ENCODE measurements at regions of chr20 and their contacts with region 1.

Region 1: DNA sequence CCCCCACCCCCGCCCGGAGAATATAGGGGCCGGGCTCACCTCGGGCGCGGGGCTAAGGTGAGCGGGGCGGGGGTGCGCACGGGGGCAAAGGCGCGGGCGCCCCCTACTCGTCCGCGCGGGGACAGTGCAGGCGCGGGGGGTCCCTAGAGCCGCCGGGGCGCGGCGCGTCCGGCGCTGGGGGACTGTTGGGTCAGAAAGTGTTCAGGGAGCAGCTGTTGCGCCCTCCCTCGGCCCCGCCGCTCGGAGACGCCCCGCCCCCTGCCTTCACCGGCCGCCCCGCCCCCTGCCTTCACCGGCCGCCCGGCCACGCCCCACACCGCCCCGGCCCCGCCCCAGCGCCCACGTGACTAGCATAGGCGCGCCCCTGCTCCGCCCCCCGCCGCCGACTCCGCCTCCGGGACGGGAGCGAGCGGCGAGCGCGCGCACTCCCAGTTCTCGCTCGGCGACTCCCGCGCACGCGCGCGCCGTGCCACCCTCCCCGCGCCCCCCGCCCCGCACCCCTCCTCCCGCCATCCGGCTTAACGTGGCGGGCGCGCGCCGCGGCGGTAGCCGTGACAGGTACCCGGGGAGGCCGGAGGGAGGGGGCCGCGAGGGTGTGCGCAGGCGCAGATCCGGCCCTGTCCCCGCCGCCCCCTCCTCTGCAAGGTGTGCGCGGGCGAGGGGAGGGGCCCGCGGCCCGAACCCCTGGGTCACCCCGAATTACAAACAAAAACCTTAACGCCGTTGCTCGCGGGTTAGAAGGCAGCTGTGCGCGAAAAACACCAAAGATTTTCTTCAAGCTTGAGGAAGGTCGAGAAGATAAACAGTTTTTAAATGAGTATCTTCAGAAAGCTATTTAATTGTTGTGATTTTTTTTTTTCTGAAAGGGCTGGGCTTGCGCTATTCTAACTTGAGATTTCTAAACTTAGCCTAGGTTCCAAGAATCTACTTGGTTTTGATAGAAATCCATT is 704 bp upstream of the ZNF217 start:
- DNase-seq: peak; percentile 90 to 97 (median 94)
- H3K4me3 ChIP-seq: peak overlapping the region; percentile 45 to 91 (median 77)
- H3K27ac ChIP-seq: peak overlapping the region; percentile 66 to 98 (median 94)
- H3K27me3 ChIP-seq: no peaks in the 10 kb centered on the region
- CTCF ChIP-seq: peak in 45 of 56 donors; percentile 13 to 59 (median 35)

Region 2: GRCh38 chr20:53425941-53426340 is 168.4 kb before region 1 on chr20:
- intact Hi-C with region 1: no loop called
- DNase-seq: no peak
- H3K4me3 ChIP-seq: no peak overlapping the region
- H3K27ac ChIP-seq: no peak overlapping the region
- H3K27me3 ChIP-seq: peaks cover 0 to 4% (median 0%) of the 10 kb centered on the region in 45 donors
- CTCF ChIP-seq: no peak

Region 3: GRCh38 chr20:53652090-53652858 is 57.9 kb after region 1 on chr20:
- intact Hi-C with region 1: no loop called
- DNase-seq: no peak
- H3K4me3 ChIP-seq: peak overlapping the region in 18 of 59 donors; percentile 2 to 28 (median 14)
- H3K27ac ChIP-seq: peak overlapping the region in 47 of 59 donors; percentile 1 to 74 (median 42)
- H3K27me3 ChIP-seq: no peaks in the 10 kb centered on the region
- CTCF ChIP-seq: no peak

Region 4: GRCh38 chr20:53677447-53678314 is 83.3 kb after region 1 on chr20:
- intact Hi-C with region 1: loop called in 1 of 2 experiments (anchors 5 kb)
- DNase-seq: no peak
- H3K4me3 ChIP-seq: no peak overlapping the region
- H3K27ac ChIP-seq: peak overlapping the region in 50 of 59 donors; percentile 21 to 92 (median 83)
- H3K27me3 ChIP-seq: no peaks in the 10 kb centered on the region
- CTCF ChIP-seq: no peak

Region 5: GRCh38 chr20:53738039-53738944 is 143.9 kb after region 1 on chr20:
- intact Hi-C with region 1: loop called in 1 of 2 experiments (anchors 10 kb)
- DNase-seq: peak in 5 of 10 donors; percentile 13 to 46 (median 29)
- H3K4me3 ChIP-seq: peak overlapping the region in 38 of 59 donors; percentile 0 to 56 (median 30)
- H3K27ac ChIP-seq: peak overlapping the region in 9 of 59 donors; percentile 13 to 38 (median 25)
- H3K27me3 ChIP-seq: peaks cover 0 to 8% (median 0%) of the 10 kb centered on the region in 45 donors
- CTCF ChIP-seq: no peak

Region 6: GRCh38 chr20:53750827-53751619 is 156.7 kb after region 1 on chr20:
- intact Hi-C with region 1: loop called in 1 of 2 experiments (anchors 10 kb)
- DNase-seq: peak in 3 of 10 donors; percentile 32 to 49 (median 39)
- H3K4me3 ChIP-seq: peak overlapping the region in 14 of 59 donors; percentile 0 to 39 (median 15)
- H3K27ac ChIP-seq: peak overlapping the region in 20 of 59 donors; percentile 0 to 54 (median 20)
- H3K27me3 ChIP-seq: no peaks in the 10 kb centered on the region
- CTCF ChIP-seq: no peak

Region 7: DNA sequence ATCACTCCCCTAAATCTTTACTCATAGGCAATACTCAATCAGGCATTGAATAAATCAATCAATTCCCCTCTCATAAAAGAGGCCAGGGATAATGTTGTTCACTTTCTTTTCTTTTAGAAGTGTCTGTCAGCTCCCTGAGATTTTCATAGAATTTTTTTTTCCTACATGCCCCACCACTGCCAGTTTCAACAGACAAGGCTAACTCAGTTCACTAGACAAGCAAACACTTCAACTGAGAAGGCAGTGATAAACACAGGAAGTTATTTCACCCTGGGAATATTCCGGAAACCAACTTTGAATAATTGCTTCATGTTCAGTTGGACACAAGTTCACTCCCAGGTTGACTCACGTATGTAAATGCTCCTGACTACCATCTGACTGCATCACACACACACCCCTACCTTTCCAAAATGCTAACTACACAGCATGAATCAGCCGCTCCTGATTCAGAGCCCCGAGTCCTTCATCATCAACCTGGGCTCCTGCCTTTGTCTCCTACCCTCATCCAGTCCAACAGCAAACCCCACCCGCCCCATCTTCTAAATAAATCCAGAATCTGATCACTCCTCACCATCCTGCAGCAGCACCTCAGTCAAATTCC is 332.2 kb after region 1 on chr20:
- intact Hi-C with region 1: no loop called
- DNase-seq: no peak
- H3K4me3 ChIP-seq: no peak overlapping the region
- H3K27ac ChIP-seq: no peak overlapping the region
- H3K27me3 ChIP-seq: no peaks in the 10 kb centered on the region
- CTCF ChIP-seq: no peak

Region 8: GRCh38 chr20:54207743-54208547 is 613.6 kb after region 1 on chr20 and contains the start of gene PFDN4:
- intact Hi-C with region 1: loop called in 1 of 2 experiments (anchors 2 kb)
- DNase-seq: peak; percentile 70 to 87 (median 78)
- H3K4me3 ChIP-seq: peak within 1 kb of the TSS; percentile 56 to 99 (median 93)
- H3K27ac ChIP-seq: peak within 1 kb of the TSS; percentile 92 to 100 (median 99)
- H3K27me3 ChIP-seq: no peaks in the 10 kb centered on the region
- CTCF ChIP-seq: peak; percentile 46 to 94 (median 85)
- total RNA-seq, gene PFDN4: 12.0 to 56.7 (median 33.2) TPM

Measured in dorsolateral prefrontal cortex (tissue), 120 donors.